ENCODE measurements at regions of chr16 and their contacts with region 1.

Region 1: DNA sequence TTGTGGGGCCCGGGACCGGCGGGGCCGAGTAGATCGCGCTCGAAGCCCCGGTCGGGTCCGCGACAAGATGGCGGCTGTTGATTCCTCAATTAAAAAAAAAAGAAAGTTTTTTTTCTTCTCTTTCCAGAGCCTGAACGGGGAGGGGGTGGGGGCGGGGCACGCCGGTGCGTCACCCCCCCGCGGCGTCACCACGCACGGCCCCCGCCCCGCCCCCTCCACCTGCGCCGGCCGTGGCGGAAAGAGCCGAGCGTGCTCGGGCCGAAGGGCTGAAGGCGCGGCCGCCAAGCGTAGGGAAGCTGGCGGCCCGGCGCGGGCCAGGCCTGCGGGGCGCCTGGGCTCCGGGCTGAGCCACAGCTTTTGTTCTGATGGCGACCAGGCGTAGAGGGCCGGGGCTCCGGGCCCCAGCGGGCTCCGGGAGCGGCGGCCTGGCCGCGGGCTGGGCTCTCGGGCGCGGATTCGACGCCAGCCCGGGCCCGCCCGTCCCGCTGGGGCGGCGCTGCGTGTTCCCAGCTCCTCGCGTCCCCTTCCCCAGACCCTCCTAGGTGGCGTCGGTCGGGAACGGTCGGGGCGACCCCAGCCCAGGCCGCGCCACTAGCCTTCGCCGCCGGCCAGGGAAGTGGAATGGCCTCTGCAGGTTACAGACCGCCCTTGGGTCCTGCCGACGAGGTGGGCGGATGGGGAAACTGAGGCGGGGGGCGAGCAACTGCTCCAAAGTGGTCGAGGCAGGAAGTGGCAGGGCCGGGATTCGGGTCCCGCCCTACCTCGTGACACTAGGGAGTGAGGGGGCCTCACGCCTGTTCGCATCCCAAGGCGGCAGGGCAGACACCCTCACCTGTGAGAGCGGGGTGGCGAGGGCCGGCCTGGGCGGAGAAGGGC is at the start of gene CREBBP:
- DNase-seq: peak; percentile 79 to 92 (median 89)
- ATAC-seq: peak; percentile 94
- H3K4me3 ChIP-seq: peak within 1 kb of the TSS; percentile 82
- H3K4me3 Mint-ChIP-seq: peak within 1 kb of the TSS; percentile 77 to 100 (median 94)
- H3K27ac ChIP-seq: peak within 1 kb of the TSS; percentile 85
- H3K27ac Mint-ChIP-seq: peak within 1 kb of the TSS; percentile 71 to 96 (median 91)
- H3K4me1 ChIP-seq: peaks cover 23 to 24% of the 10 kb centered on the region in 2 donors
- H3K4me1 Mint-ChIP-seq: peaks cover 32 to 46% (median 39%) of the 10 kb centered on the region in 7 donors
- H3K27me3 ChIP-seq: no peaks in the 10 kb centered on the region
- H3K27me3 Mint-ChIP-seq: peaks cover 0 to 8% (median 6%) of the 10 kb centered on the region in 5 donors
- total RNA-seq, gene CREBBP: 73.6 to 194 (median 137) TPM

Region 2: DNA sequence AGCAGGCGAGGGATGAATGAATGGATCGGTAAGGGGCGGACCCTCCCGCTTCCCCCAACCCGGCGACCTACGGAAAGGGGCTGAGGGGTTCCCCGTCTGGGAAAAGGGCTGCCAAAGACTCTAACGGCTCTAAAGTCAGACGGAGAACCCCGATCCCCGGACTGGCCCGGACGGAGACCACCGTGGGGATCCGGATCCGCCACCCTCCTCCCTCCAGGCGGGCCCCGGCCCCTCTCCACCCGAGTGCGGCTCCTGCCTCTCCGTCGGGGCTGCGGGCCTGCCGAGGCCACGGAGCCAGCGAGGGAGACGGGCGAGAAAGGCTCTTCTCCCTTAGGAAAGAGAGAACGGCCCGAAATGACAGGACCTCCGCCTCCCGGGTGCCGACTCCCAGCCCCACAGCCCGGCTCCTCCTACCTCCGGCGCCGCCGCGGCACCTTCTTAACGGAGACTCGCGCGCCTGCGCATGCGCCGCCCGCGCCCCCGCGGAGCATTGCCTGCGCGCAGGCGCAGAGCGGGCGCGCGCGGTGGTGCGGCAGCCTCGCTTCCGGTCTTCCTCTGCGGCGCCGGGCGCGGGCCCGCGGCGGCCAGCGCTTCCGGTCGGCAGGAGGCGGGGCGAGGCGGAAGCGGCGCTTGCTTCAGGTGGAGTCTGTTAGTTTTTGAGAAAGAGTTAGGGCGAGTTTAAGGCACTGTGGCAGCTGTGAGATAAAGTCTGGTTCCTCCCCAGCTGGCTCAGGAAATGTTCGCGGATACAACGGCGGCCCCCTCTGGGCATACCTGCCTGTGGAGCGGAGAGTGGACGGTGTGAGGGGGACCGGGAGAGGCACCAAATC is 269.5 kb before region 1 on chr16 and contains the start of gene SLX4:
- CTCF ChIA-PET with region 1: no interaction called
- POLR2A ChIA-PET with region 1: no interaction called
- intact Hi-C with region 1: loop called in 1 of 2 experiments (anchors 1 kb)
- DNase-seq: peak; percentile 88 to 97 (median 95)
- ATAC-seq: peak; percentile 92
- H3K4me3 ChIP-seq: peak within 1 kb of the TSS; percentile 99
- H3K4me3 Mint-ChIP-seq: peak within 1 kb of the TSS; percentile 93 to 100 (median 99)
- H3K27ac ChIP-seq: peak within 1 kb of the TSS; percentile 90
- H3K27ac Mint-ChIP-seq: peak within 1 kb of the TSS; percentile 92 to 99 (median 98)
- H3K4me1 ChIP-seq: peaks cover 18 to 21% of the 10 kb centered on the region in 2 donors
- H3K4me1 Mint-ChIP-seq: peaks cover 37 to 70% (median 62%) of the 10 kb centered on the region in 7 donors
- H3K27me3 ChIP-seq: no peaks in the 10 kb centered on the region
- H3K27me3 Mint-ChIP-seq: no peaks in the 10 kb centered on the region
- total RNA-seq, gene SLX4: 7.1 to 12.5 (median 8.5) TPM

Region 3: DNA sequence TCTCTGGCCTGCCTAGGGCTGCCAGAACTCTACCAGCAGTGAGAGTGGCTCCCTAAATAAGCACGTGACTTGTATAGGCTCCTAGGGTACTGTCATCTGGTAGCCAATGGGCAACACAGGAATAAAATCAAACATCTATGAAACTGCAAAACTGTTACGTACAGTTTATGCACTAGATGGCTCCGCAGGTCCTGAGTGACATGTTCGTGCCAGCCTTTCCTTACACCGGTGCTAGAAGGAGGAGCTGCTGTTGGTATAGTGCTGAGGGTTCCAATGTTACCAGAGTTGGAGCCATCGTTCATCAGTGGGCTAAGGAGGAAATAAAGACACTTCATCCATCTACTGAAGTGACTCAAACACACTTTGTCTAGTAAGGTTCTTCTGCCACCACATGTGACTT is 100.3 kb before region 1 on chr16:
- CTCF ChIA-PET with region 1: interaction called, 3 read pairs
- POLR2A ChIA-PET with region 1: interaction called, 3 read pairs
- intact Hi-C with region 1: loop called (anchors 1 to 5 kb)
- DNase-seq: peak in 4 of 9 donors; percentile 8 to 41 (median 24)
- ATAC-seq: peak; percentile 57
- H3K4me3 ChIP-seq: no peak overlapping the region
- H3K4me3 Mint-ChIP-seq: no peak overlapping the region
- H3K27ac ChIP-seq: no peak overlapping the region
- H3K27ac Mint-ChIP-seq: peak overlapping the region in 5 of 9 donors; percentile 13 to 76 (median 65)
- H3K4me1 ChIP-seq: no peaks in the 10 kb centered on the region
- H3K4me1 Mint-ChIP-seq: peaks cover 7 to 39% (median 22%) of the 10 kb centered on the region in 7 donors
- H3K27me3 ChIP-seq: no peaks in the 10 kb centered on the region
- H3K27me3 Mint-ChIP-seq: no peaks in the 10 kb centered on the region

Region 4: GRCh38 chr16:3819746-3820724 is 60.8 kb before region 1 on chr16:
- CTCF ChIA-PET with region 1: no interaction called
- POLR2A ChIA-PET with region 1: interaction called, 3 read pairs
- intact Hi-C with region 1: loop called in 1 of 2 experiments (anchors 10 kb)
- DNase-seq: peak in 7 of 9 donors; percentile 24 to 54 (median 33)
- ATAC-seq: peak; percentile 57
- H3K4me3 ChIP-seq: no peak overlapping the region
- H3K4me3 Mint-ChIP-seq: peak overlapping the region; percentile 39 to 80 (median 64)
- H3K27ac ChIP-seq: no peak overlapping the region
- H3K27ac Mint-ChIP-seq: peak overlapping the region in 7 of 9 donors; percentile 5 to 82 (median 53)
- H3K4me1 ChIP-seq: peaks cover 58 to 81% of the 10 kb centered on the region in 2 donors
- H3K4me1 Mint-ChIP-seq: peaks cover 71 to 96% (median 94%) of the 10 kb centered on the region in 7 donors
- H3K27me3 ChIP-seq: no peaks in the 10 kb centered on the region
- H3K27me3 Mint-ChIP-seq: no peaks in the 10 kb centered on the region

Region 5: DNA sequence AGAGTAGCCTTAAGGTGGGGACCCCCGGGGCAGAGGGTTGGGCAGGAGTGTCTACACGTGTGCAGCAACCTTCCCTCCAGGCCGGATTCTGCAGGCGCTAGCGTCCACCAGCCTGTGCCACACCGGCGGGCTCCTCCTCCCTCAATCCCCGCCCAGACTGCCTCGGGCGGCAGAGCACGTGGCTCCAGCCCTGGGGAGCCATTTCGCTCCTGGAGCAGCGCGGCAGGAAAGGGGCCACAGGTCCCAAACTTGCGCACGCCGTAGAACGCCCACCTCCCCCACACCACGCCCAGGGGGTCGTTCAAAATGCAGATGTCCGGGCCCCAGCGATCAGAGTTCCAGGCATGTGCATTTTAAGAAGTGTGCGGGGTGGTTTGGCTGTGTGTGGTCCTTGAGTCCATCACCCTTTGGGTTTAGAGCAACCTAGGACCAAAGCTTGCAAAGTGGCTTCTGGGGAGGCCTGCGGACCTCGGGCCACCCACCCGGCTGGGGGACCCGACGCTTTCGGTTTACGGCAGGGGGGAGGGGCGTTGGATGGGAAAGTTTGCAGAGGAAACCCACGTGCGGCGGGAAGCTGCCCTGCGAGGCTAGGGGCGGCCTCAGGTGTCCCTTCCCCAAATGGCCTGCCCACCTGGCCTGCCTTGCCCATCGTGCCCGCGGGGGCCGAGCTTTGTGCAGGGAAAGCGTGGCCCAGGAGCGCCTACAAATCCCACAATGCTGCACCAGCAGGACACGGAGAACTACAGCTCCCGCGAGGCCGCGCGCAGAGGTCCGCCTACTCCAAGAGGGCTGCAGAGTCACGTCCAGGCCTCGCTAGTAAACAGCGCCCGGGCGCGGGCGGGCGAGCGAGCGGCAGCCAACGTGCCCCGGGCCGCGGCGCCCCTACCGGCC is 390.6 kb after region 1 on chr16:
- CTCF ChIA-PET with region 1: no interaction called
- POLR2A ChIA-PET with region 1: interaction called, 3 read pairs
- intact Hi-C with region 1: loop called in 1 of 2 experiments (anchors 1 kb)
- DNase-seq: peak; percentile 68 to 90 (median 84)
- ATAC-seq: peak; percentile 89
- H3K4me3 ChIP-seq: peak overlapping the region; percentile 99
- H3K4me3 Mint-ChIP-seq: peak overlapping the region; percentile 85 to 97 (median 92)
- H3K27ac ChIP-seq: peak overlapping the region; percentile 58
- H3K27ac Mint-ChIP-seq: peak overlapping the region; percentile 67 to 98 (median 83)
- H3K4me1 ChIP-seq: peaks cover 5 to 13% of the 10 kb centered on the region in 2 donors
- H3K4me1 Mint-ChIP-seq: peaks cover 8 to 23% (median 15%) of the 10 kb centered on the region in 7 donors
- H3K27me3 ChIP-seq: no peaks in the 10 kb centered on the region
- H3K27me3 Mint-ChIP-seq: no peaks in the 10 kb centered on the region